Head of caudate nucleus (tissue), 42 donors: ENCODE measurements at regions of chr5 and their contacts with region 1.

Region 1: DNA sequence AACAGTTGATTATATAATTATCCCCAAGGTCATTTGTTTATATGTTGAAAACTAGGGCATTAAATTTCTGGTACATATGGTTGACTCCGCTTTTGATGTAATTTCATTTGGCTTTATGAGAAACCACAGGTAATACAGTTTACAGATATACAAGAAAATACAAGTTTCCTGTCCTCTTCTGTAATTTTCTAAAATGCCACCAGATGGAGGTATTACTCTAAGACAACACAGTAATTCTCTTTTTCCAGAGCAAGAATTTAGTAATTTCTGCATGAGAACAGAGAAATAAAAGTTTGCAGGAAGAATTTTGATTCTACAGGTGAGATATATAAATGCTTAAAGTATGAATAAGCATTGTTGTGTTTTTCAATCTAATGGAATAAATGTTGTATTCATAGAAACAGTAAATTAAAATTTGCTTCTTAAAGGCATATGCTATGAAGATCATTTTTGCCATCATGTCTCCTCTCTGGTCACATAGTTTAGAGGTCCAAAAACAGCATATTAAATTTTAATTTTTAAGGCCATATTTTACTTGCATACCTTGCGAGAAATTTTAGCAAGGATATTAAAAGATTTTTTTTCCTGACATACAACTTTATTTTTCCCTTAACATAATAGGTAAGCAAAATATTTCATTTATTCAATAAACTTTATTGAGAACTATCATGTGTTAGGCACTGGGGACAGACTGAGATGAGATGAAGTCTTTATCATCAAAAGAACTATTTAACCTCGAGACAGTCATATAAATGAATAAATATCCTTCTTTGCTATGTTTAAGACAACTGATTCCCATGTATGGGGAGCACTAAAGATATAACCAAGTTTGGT is 22.7 kb downstream of the CHD1 start:
- DNase-seq: no peak

Region 2: GRCh38 chr5:99032234-99033013 is 126.3 kb after region 1 on chr5:
- intact Hi-C with region 1: loop called (anchors 5 kb)
- DNase-seq: peak in 39 of 42 donors; percentile 24 to 85 (median 65)

Region 3: GRCh38 chr5:99076723-99077640 is 170.9 kb after region 1 on chr5:
- intact Hi-C with region 1: no loop called
- DNase-seq: no peak